Heart right ventricle (tissue), 16 donors: ENCODE measurements at regions of chr21 and their contacts with region 1.

Region 1: DNA sequence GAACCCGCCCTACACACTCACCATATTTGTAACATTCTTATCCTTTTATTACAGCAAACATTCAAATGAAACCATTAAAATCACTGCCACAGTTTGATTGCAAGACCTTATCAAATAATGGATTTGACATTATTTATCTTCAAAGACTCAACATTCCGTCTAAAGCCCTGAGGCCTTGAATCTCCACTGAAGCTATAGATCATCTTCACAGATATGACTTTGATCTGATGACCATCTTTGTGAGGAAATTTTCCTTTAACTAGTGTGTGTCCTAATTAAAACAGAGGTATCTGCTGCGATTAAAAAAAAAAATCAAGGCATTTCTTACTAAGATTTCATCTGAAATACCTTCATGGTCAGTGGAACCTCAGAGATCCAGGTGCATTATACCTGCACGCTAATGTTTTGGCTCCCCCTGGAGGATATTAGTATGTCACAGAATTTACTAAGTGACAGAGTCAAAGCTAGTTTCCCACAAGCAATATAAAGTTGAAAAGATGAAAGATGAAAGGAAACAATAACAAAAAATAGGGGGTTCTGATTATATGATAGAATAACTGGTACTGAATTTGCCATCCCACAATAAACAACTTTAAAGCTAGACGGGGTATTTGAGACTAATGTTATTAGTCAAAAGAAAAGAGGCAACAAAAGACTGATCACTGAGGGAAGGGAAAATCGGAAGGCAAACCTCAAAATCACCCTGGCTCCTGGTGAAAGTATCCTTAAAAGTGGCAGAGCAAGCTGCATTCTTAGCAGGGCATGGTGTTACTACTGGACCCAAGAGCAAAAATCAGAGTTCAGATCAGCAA is 923.4 kb downstream of the NCAM2 start:
- DNase-seq: no peak
- ATAC-seq: no peak
- H3K4me3 ChIP-seq: no peak overlapping the region
- H3K27ac ChIP-seq: no peak overlapping the region
- H3K4me1 ChIP-seq: no peaks in the 10 kb centered on the region
- H3K27me3 ChIP-seq: no peaks in the 10 kb centered on the region
- CTCF ChIP-seq: peak in 8 of 9 donors; percentile 7 to 62 (median 43)

Region 2: DNA sequence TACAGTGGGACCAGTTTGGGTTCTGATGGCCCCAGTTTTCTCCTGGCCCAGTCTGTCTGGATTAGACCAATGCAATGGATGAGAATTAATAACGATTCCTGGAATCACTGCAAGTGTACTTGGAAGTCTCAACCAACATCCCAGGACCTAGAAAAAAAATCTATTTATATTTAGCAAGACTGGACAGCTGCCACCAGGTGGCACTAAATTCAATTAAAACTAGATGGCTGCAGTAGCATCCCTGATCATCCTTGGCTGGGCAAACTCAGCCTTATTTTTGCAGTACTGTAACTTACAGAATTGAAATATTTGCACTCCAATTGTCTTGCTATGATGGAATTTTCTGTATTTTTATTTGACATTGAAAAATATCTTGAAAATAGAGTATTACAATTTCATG is 757.7 kb before region 1 on chr21:
- intact Hi-C with region 1: loop called in 1 of 10 experiments (anchors 5 kb)
- DNase-seq: peak in 1 of 2 donors; percentile 31
- ATAC-seq: peak in 4 of 8 donors; percentile 36 to 79 (median 65)
- H3K4me3 ChIP-seq: no peak overlapping the region
- H3K27ac ChIP-seq: no peak overlapping the region
- H3K4me1 ChIP-seq: peaks cover 0 to 6% (median 0%) of the 10 kb centered on the region in 9 donors
- H3K27me3 ChIP-seq: no peaks in the 10 kb centered on the region
- CTCF ChIP-seq: peak in 7 of 9 donors; percentile 48 to 67 (median 59)